Dendritic cell treated with granulocyte-macrophage colony-stimulating factor and Interleukin-4, amounts not matched to agents 40 ng/mL and 50 ng/mL, for 4 days (primary cell): ENCODE measurements at regions of chr17 and their contacts with region 1.

Region 1: GRCh38 chr17:29293890-29294579 is at the start of gene NUFIP2:
- H3K4me3 Mint-ChIP-seq: peak within 1 kb of the TSS; percentile 98
- H3K27ac Mint-ChIP-seq: peak within 1 kb of the TSS; percentile 98
- H3K4me1 Mint-ChIP-seq: peaks cover 23% of the 10 kb centered on the region
- H3K27me3 Mint-ChIP-seq: no peaks in the 10 kb centered on the region

Region 2: GRCh38 chr17:28951991-28952975 is 341.8 kb before region 1 on chr17:
- intact Hi-C with region 1: loop called (anchors 5 kb)
- H3K4me3 Mint-ChIP-seq: no peak overlapping the region
- H3K27ac Mint-ChIP-seq: no peak overlapping the region
- H3K4me1 Mint-ChIP-seq: peaks cover 16% of the 10 kb centered on the region
- H3K27me3 Mint-ChIP-seq: no peaks in the 10 kb centered on the region

Region 3: GRCh38 chr17:29148790-29149430 is 145.1 kb before region 1 on chr17:
- intact Hi-C with region 1: loop called (anchors 1 kb)
- H3K4me3 Mint-ChIP-seq: peak overlapping the region; percentile 70
- H3K27ac Mint-ChIP-seq: peak overlapping the region; percentile 96
- H3K4me1 Mint-ChIP-seq: peaks cover 90% of the 10 kb centered on the region
- H3K27me3 Mint-ChIP-seq: no peaks in the 10 kb centered on the region

Region 4: GRCh38 chr17:29212681-29213121 is 81.3 kb before region 1 on chr17:
- intact Hi-C with region 1: loop called (anchors 5 kb)
- H3K4me3 Mint-ChIP-seq: peak overlapping the region; percentile 17
- H3K27ac Mint-ChIP-seq: peak overlapping the region; percentile 88
- H3K4me1 Mint-ChIP-seq: peaks cover 62% of the 10 kb centered on the region
- H3K27me3 Mint-ChIP-seq: no peaks in the 10 kb centered on the region

Region 5: GRCh38 chr17:29389982-29390850 is 96.2 kb after region 1 on chr17 and contains the start of gene TAOK1:
- intact Hi-C with region 1: loop called (anchors 10 kb)
- H3K4me3 Mint-ChIP-seq: peak within 1 kb of the TSS; percentile 96
- H3K27ac Mint-ChIP-seq: peak within 1 kb of the TSS; percentile 90
- H3K4me1 Mint-ChIP-seq: peaks cover 33% of the 10 kb centered on the region
- H3K27me3 Mint-ChIP-seq: no peaks in the 10 kb centered on the region